CD8-positive, alpha-beta T cell (primary cell): ENCODE measurements at regions of chr5 and their contacts with region 1.

Region 1: GRCh38 chr5:137660349-137660817 is 75.5 kb downstream of the KLHL3 start:
- DNase-seq: peak; percentile 37 to 84 (median 74)
- ATAC-seq: peak; percentile 94
- H3K4me3 ChIP-seq: no peak overlapping the region
- H3K4me3 Mint-ChIP-seq: no peak overlapping the region
- H3K27ac ChIP-seq: no peak overlapping the region
- H3K27ac Mint-ChIP-seq: no peak overlapping the region
- H3K4me1 ChIP-seq: no peaks in the 10 kb centered on the region
- H3K4me1 Mint-ChIP-seq: peaks cover 11% of the 10 kb centered on the region
- H3K27me3 ChIP-seq: no peaks in the 10 kb centered on the region
- H3K27me3 Mint-ChIP-seq: no peaks in the 10 kb centered on the region
- CTCF ChIP-seq: peak; percentile 75

Region 2: DNA sequence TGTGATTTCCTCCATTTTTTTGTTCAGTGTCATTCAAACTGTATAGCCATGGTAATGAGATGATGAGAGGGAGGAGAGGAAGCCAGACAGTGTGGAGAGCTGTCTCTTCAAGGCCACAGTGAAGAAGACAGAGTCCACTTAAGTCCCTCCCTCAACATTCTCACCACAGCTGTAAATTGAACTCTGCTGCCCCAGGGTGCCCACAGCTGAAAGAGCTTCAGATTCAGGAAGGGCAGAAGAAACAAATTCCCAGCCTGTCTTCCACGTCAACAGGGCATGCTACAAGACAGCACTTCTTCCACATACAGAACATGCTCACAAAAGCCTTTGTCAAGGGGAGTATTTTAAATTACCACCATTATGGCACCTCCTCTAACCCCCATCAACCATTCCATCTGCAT is 24.9 kb before region 1 on chr5:
- CTCF ChIA-PET with region 1: interaction called, 14 read pairs
- POLR2A ChIA-PET with region 1: no interaction called
- intact Hi-C with region 1: no loop called
- DNase-seq: no peak
- ATAC-seq: no peak
- H3K4me3 ChIP-seq: no peak overlapping the region
- H3K4me3 Mint-ChIP-seq: no peak overlapping the region
- H3K27ac ChIP-seq: no peak overlapping the region
- H3K27ac Mint-ChIP-seq: no peak overlapping the region
- H3K4me1 ChIP-seq: no peaks in the 10 kb centered on the region
- H3K4me1 Mint-ChIP-seq: no peaks in the 10 kb centered on the region
- H3K27me3 ChIP-seq: no peaks in the 10 kb centered on the region
- H3K27me3 Mint-ChIP-seq: no peaks in the 10 kb centered on the region
- CTCF ChIP-seq: no peak

Region 3: DNA sequence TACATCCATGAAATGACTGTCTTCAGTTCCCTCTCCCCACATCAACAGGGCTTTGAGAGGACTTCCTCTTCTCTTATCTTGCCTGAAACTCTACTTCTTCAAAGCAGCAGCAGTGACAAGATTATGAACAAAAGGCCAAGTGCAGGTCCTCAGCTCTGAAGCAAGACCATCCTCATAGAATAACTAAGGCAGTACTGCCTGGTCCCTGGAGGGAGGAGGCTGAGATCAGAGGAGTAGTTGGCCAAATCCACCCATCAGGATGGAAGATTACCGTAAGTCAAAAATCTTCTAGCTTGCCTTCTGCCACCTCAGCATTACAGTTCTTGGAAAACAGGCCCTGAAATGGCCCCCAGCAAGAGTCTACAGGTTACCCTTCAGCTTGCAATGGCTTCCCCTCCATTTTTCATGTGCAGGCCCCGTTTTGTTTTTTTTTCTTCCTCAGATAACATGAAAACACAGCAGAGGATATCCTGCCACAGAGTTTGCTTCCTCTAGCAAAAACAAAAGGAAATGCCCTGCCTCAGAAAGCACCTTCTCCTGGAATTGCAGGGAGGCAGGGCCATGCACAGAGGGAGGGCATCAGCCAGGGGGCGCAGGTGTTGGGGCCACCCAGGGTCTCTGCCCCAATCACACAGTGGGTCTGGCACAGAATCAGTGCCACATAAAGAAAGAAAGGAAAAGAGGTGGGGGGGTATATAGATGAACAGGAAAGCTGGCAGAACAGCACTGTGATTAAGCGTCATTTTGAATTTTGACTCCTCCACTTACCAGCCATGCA is 35.5 kb after region 1 on chr5:
- CTCF ChIA-PET with region 1: interaction called, 38 read pairs
- POLR2A ChIA-PET with region 1: interaction called, 12 read pairs
- intact Hi-C with region 1: loop called in 1 of 2 experiments (anchors 2 kb)
- DNase-seq: peak in 8 of 9 experiments; percentile 13 to 72 (median 22)
- ATAC-seq: peak; percentile 76
- H3K4me3 ChIP-seq: no peak overlapping the region
- H3K4me3 Mint-ChIP-seq: peak overlapping the region; percentile 68
- H3K27ac ChIP-seq: peak overlapping the region; percentile 32 to 66
- H3K27ac Mint-ChIP-seq: peak overlapping the region; percentile 95
- H3K4me1 ChIP-seq: peaks cover 41% of the 10 kb centered on the region
- H3K4me1 Mint-ChIP-seq: peaks cover 55% of the 10 kb centered on the region
- H3K27me3 ChIP-seq: no peaks in the 10 kb centered on the region
- H3K27me3 Mint-ChIP-seq: no peaks in the 10 kb centered on the region
- CTCF ChIP-seq: peak; percentile 23

Region 4: DNA sequence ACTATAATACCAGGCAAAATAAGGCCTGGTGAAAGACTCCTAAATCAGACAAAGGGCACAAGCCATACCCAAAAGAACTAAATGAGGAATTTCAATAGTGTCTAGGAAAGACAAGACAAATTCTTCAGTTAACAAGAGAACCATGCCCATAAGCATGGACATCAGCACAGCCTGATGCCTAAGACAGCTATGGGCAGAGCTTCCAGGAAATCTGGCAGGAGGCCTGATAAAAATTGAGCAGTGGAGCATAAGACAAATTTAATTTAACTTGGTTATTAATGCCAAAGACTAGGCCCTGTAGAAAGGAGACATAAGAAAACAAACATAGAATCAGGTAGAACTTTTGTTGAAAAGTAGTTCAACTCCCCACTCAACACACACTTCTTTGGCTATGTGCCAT is 58.2 kb after region 1 on chr5:
- CTCF ChIA-PET with region 1: interaction called, 27 read pairs
- POLR2A ChIA-PET with region 1: no interaction called
- intact Hi-C with region 1: no loop called
- DNase-seq: no peak
- ATAC-seq: no peak
- H3K4me3 ChIP-seq: no peak overlapping the region
- H3K4me3 Mint-ChIP-seq: no peak overlapping the region
- H3K27ac ChIP-seq: no peak overlapping the region
- H3K27ac Mint-ChIP-seq: no peak overlapping the region
- H3K4me1 ChIP-seq: no peaks in the 10 kb centered on the region
- H3K4me1 Mint-ChIP-seq: peaks cover 7% of the 10 kb centered on the region
- H3K27me3 ChIP-seq: no peaks in the 10 kb centered on the region
- H3K27me3 Mint-ChIP-seq: no peaks in the 10 kb centered on the region
- CTCF ChIP-seq: no peak